ENCODE measurements at regions of chr1 and their contacts with region 1.

Region 1: GRCh38 chr1:39845275-39846116 is 37.8 kb downstream of the TRIT1 start:
- H3K4me3 ChIP-seq: no peak overlapping the region
- H3K27ac ChIP-seq: no peak overlapping the region
- H3K4me1 ChIP-seq: peaks cover 12% of the 10 kb centered on the region
- CTCF ChIP-seq: no peak

Region 2: GRCh38 chr1:39816415-39817090 is 28.9 kb before region 1 on chr1:
- CTCF ChIA-PET with region 1: interaction called, 34 read pairs
- POLR2A ChIA-PET with region 1: no interaction called
- H3K4me3 ChIP-seq: no peak overlapping the region
- H3K27ac ChIP-seq: no peak overlapping the region
- H3K4me1 ChIP-seq: no peaks in the 10 kb centered on the region
- CTCF ChIP-seq: peak; percentile 76

Region 3: DNA sequence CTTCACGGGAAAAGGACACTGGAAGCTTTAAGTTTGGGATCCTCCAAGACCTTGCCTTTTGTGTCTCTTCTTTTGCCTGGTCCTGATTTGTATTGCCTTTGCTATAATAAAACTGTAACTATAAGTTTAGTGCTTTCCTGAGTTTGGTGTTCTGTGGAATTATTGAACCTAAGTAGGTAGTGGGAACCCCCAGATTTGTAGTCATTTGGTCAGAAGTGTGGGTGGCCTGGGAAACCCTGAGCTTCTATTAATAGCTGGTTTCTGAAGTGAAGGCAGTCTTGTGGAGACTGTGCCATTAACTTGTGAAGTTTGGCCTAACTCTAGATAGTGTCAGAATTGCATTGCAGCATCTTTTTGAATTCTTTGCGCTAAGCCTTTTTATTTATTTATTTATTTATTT is 63.0 kb after region 1 on chr1:
- CTCF ChIA-PET with region 1: no interaction called
- POLR2A ChIA-PET with region 1: no interaction called
- H3K4me3 ChIP-seq: no peak overlapping the region
- H3K27ac ChIP-seq: no peak overlapping the region
- H3K4me1 ChIP-seq: no peaks in the 10 kb centered on the region
- CTCF ChIP-seq: no peak

Region 4: GRCh38 chr1:40079774-40080400 is 234.4 kb after region 1 on chr1:
- CTCF ChIA-PET with region 1: no interaction called
- POLR2A ChIA-PET with region 1: no interaction called
- H3K4me3 ChIP-seq: no peak overlapping the region
- H3K27ac ChIP-seq: no peak overlapping the region
- H3K4me1 ChIP-seq: no peaks in the 10 kb centered on the region
- CTCF ChIP-seq: no peak

Measured in HEK293 (cell line).